ENCODE measurements at regions of chr11 and their contacts with region 1.

Region 1: DNA sequence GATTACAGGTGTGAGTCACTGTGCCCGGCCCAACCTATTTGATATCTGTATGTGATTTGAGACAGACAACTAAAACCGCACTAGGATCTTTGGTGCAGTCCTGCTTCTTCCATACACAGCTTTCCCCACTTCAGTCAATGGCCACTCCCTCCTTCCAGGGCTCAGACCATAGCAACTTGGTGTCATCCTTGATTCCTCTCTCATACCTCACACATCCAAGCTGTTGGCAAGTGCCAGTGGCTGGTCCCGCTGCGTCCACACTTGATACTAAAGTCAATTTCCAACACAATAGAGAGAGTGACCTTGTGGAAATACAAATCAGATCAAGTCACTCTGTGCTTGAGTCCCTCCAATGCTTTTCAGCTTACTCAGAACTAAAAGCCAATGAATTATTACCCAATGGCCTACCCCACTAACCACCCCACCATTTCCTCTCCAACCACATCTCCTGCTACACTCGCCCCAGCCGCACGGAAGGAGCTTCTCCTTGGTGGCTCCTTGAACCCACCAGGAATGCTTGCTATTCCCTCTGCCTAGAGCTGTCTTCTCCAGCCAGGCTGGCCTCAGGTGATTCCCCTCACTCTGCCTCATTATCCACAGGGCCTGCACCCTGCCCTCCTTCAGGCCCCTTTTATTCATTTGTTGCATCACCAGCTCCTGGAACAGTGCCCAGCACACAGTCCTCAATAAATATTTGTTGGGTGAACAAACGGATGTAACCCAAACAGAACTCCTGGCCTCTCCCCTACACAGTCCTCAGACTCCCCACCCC is 12.9 kb downstream of the ABTB2 start:
- DNase-seq: peak; percentile 90 to 99
- H3K4me3 ChIP-seq: peak overlapping the region; percentile 40; the same call in 1 of the 2 replicates
- H3K27ac ChIP-seq: peak overlapping the region; percentile 91
- H3K4me1 ChIP-seq: peaks cover 99% of the 10 kb centered on the region
- H3K27me3 ChIP-seq: no peaks in the 10 kb centered on the region
- CTCF ChIP-seq: no peak

Region 2: GRCh38 chr11:34174412-34175041 is 170.4 kb before region 1 on chr11:
- CTCF ChIA-PET with region 1: interaction called, 10 read pairs
- POLR2A ChIA-PET with region 1: interaction called, 8 read pairs
- intact Hi-C with region 1: no loop called
- DNase-seq: peak; percentile 53 to 85
- H3K4me3 ChIP-seq: peak overlapping the region; percentile 40; the same call in 1 of the 2 replicates
- H3K27ac ChIP-seq: no peak overlapping the region
- H3K4me1 ChIP-seq: peaks cover 8% of the 10 kb centered on the region
- H3K27me3 ChIP-seq: no peaks in the 10 kb centered on the region
- CTCF ChIP-seq: peak; percentile 92

Region 3: GRCh38 chr11:34192481-34193401 is 152.2 kb before region 1 on chr11:
- CTCF ChIA-PET with region 1: no interaction called
- POLR2A ChIA-PET with region 1: no interaction called
- intact Hi-C with region 1: loop called (anchors 1 kb)
- DNase-seq: peak; percentile 83 to 85
- H3K4me3 ChIP-seq: no peak overlapping the region
- H3K27ac ChIP-seq: peak overlapping the region; percentile 25; the same call in 1 of the 2 replicates
- H3K4me1 ChIP-seq: peaks cover 37% of the 10 kb centered on the region
- H3K27me3 ChIP-seq: no peaks in the 10 kb centered on the region
- CTCF ChIP-seq: no peak

Region 4: DNA sequence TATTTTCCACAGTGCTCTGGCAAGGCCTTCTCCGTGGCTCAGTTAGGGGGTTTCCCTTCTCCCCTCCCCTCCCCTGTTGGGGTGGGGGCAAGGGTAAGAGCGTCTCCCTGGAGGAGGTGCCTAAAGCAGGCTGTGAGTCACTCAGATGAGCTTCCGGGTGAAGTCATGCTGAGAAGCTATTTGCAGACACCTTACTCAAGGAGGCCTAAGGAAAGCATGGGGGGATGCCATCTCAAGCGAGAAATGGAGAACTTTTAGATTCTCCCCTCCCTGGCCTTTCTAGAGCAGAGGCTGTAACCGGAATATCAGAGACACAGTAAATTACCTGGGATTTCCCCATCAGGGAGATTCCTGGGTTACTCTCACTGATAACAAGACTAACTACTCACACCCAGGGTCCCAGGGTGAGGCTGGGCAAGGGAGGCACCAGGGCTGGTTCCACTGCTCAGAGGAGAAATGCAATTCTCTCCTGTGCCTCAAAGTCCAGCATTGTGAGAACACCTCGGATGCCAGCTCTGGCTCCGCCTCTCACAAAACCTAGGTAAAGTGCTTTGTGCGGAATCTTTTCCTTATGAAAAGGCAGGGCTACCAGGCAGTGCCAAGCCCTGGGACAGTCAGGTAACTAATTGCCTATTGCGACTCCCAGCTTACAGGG is 110.7 kb before region 1 on chr11:
- CTCF ChIA-PET with region 1: no interaction called
- POLR2A ChIA-PET with region 1: interaction called, 6 read pairs
- intact Hi-C with region 1: loop called (anchors 1 kb)
- DNase-seq: peak; percentile 73 to 94
- H3K4me3 ChIP-seq: peak overlapping the region; percentile 37; the same call in 1 of the 2 replicates
- H3K27ac ChIP-seq: peak overlapping the region; percentile 87
- H3K4me1 ChIP-seq: peaks cover 35% of the 10 kb centered on the region
- H3K27me3 ChIP-seq: no peaks in the 10 kb centered on the region
- CTCF ChIP-seq: no peak

Region 5: DNA sequence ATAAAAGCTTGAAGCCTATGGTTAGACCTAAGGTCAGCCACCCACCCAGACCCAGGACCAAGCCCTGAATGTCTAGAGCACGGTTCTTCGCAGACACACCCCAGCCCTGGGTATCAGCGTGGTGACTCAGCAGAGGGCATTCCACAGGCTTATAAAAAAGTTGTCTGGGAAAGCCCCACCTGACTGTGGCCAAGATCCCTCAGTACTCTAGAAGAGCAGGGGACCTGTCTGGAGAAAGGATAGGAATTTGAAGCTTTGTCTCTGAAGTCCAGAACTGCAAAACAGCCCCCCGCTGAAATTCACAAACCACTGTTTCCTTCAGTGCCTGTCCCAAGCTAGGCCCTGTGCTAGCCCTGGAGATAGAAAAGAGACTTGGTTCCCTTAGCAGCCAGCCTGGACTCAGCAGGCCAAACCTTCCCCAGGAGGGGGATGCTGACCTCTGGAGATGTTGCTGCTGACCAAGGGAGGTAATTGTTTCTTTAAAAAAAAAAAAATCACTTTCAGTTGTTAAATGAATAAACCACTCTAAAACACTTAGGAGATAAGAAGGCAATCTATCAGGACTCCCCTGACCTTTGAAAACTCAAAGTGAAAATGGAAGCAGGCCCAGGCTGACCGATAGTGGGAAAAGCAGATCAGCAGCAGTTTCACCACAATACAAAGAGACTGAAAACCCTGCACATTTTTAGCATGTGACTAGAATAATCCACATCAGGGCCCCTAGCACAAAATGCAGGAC is 101.1 kb before region 1 on chr11:
- CTCF ChIA-PET with region 1: no interaction called
- POLR2A ChIA-PET with region 1: no interaction called
- intact Hi-C with region 1: loop called (anchors 1 kb)
- DNase-seq: peak; percentile 90 to 95
- H3K4me3 ChIP-seq: no peak overlapping the region
- H3K27ac ChIP-seq: peak overlapping the region; percentile 76
- H3K4me1 ChIP-seq: peaks cover 64% of the 10 kb centered on the region
- H3K27me3 ChIP-seq: no peaks in the 10 kb centered on the region
- CTCF ChIP-seq: no peak

Region 6: DNA sequence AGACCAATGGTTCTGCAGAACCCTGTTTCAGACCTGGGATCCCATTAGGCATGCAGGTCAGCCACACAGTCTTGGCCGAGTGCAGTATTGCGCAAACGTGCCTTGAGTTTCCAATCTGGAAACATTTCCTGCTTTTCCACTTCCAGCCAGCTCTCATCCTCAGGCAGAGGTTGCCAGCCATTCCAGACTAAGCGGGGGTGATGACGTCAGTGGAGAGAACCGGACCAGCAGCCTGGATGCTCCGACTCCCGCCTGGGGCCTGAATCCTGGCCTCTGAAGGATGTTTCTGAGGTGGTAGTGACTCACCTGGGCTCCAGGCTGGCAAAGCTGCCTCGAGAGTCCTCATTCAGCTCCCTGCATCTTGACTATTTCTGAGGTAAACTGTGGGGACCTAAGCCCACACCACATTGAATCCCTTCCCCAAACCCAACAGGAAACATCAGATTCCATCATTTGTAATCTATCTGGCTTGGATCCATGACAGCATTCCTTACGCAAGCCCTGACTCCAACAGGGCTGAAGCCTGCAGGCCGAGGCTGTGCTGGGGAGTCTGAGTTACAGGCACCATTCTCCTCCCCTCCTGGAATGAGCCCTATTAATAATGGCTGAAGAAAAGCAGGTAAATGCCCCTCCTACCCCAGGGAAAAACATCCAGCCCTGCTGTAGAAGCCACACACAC is 70.1 kb before region 1 on chr11:
- CTCF ChIA-PET with region 1: no interaction called
- POLR2A ChIA-PET with region 1: interaction called, 11 read pairs
- intact Hi-C with region 1: loop called (anchors 1 kb)
- DNase-seq: peak; percentile 99 to 100
- H3K4me3 ChIP-seq: peak overlapping the region; percentile 2; the same call in 1 of the 2 replicates
- H3K27ac ChIP-seq: peak overlapping the region; percentile 77
- H3K4me1 ChIP-seq: peaks cover 34% of the 10 kb centered on the region
- H3K27me3 ChIP-seq: no peaks in the 10 kb centered on the region
- CTCF ChIP-seq: no peak

Region 7: DNA sequence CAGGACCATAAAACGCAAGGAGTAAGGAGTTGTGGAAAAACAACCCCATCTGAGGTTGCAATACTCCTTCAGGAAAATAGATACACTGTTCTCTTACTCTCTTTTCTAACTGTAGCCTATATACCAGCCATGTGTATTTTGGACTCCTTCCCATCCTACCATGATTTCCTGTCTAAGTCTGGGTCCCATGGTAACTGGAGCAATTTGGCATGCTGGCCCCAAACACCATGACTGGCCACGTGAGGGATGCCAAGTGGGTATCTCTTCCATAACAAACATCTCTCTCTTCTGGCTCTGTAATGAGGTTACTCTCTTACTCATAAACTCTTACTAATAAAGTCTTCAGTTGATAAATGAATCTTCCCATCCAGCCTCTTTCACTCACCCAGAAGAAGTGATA is 13.6 kb before region 1 on chr11:
- CTCF ChIA-PET with region 1: no interaction called
- POLR2A ChIA-PET with region 1: interaction called, 3 read pairs
- intact Hi-C with region 1: loop called (anchors 2 kb)
- DNase-seq: peak in 1 of 2 experiments; percentile 76
- H3K4me3 ChIP-seq: peak overlapping the region; percentile 42; the same call in 1 of the 2 replicates
- H3K27ac ChIP-seq: peak overlapping the region; percentile 80
- H3K4me1 ChIP-seq: peaks cover 75% of the 10 kb centered on the region
- H3K27me3 ChIP-seq: no peaks in the 10 kb centered on the region
- CTCF ChIP-seq: no peak

Region 8: DNA sequence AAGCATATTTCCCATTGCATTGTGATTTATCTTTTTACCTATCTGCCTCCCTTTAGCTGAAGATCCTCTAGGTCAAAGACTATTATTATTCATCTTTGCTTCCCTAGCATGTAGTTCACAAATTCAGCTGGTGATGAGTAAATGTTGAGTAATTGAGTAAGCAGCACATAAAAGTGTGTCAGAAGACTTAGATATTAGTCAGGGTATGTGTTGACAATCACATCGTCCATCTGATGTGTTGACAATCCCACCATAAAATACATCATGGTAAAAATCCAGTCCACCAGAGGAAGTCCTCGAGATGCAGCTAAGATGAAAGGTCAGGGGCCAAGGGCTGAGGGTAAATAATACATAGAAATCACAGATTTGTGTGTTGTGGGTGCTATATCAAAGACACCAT is 35.7 kb after region 1 on chr11:
- CTCF ChIA-PET with region 1: no interaction called
- POLR2A ChIA-PET with region 1: no interaction called
- intact Hi-C with region 1: no loop called
- DNase-seq: peak in 1 of 2 experiments; percentile 85
- H3K4me3 ChIP-seq: no peak overlapping the region
- H3K27ac ChIP-seq: peak overlapping the region; percentile 73; the same call in 1 of the 2 replicates
- H3K4me1 ChIP-seq: peaks cover 36% of the 10 kb centered on the region
- H3K27me3 ChIP-seq: no peaks in the 10 kb centered on the region
- CTCF ChIP-seq: no peak

Region 9: GRCh38 chr11:34757026-34757451 is 412.1 kb after region 1 on chr11:
- CTCF ChIA-PET with region 1: no interaction called
- POLR2A ChIA-PET with region 1: no interaction called
- intact Hi-C with region 1: no loop called
- DNase-seq: peak in 1 of 2 experiments; percentile 95
- H3K4me3 ChIP-seq: no peak overlapping the region
- H3K27ac ChIP-seq: no peak overlapping the region
- H3K4me1 ChIP-seq: peaks cover 21% of the 10 kb centered on the region
- H3K27me3 ChIP-seq: no peaks in the 10 kb centered on the region
- CTCF ChIP-seq: no peak